WTC11 (cell line): ENCODE measurements at regions of chr7 and their contacts with region 1.

Region 1: DNA sequence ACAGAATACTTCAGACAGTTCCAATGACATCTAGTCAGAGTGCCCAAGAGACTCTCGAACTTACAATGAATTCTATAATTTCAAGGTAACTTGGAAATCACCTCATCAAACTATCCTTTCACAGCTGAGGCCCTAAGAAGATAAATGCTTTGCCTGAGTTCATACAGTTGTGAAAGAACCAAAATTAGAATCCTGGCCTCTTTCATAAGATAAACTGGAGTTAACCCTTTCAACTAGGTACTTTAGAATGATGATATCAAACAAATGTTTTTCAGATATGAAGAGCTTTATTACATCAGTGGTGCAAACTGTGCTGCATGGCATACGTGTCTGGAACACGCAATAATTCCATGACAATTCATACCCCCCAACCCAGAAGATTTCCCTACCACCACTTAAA is 17.9 kb downstream of the DOCK4 start:
- DNase-seq: no peak
- ATAC-seq: no peak
- H3K4me3 Mint-ChIP-seq: no peak overlapping the region
- H3K27ac Mint-ChIP-seq: no peak overlapping the region
- H3K4me1 Mint-ChIP-seq: peaks cover 15% of the 10 kb centered on the region
- H3K27me3 Mint-ChIP-seq: no peaks in the 10 kb centered on the region
- CTCF ChIP-seq: no peak

Region 2: GRCh38 chr7:111752022-111752582 is 436.2 kb before region 1 on chr7:
- CTCF ChIA-PET with region 1: interaction called, 10 read pairs
- POLR2A ChIA-PET with region 1: no interaction called
- DNase-seq: peak; percentile 80
- ATAC-seq: peak; percentile 81
- H3K4me3 Mint-ChIP-seq: no peak overlapping the region
- H3K27ac Mint-ChIP-seq: no peak overlapping the region
- H3K4me1 Mint-ChIP-seq: peaks cover 7% of the 10 kb centered on the region
- H3K27me3 Mint-ChIP-seq: no peaks in the 10 kb centered on the region
- CTCF ChIP-seq: peak; percentile 82

Region 3: GRCh38 chr7:112206238-112207044 is 18.2 kb after region 1 on chr7 and contains the starts of genes DOCK4 and ZNF277:
- CTCF ChIA-PET with region 1: no interaction called
- POLR2A ChIA-PET with region 1: no interaction called
- DNase-seq: peak; percentile 99
- ATAC-seq: peak; percentile 88
- H3K4me3 Mint-ChIP-seq: peak within 1 kb of the TSS; percentile 89
- H3K27ac Mint-ChIP-seq: peak within 1 kb of the TSS; percentile 63
- H3K4me1 Mint-ChIP-seq: peaks cover 42% of the 10 kb centered on the region
- H3K27me3 Mint-ChIP-seq: no peaks in the 10 kb centered on the region
- CTCF ChIP-seq: no peak
- total RNA-seq, gene DOCK4: 13.3 to 20.4 TPM (median 15.2 TPM) in 3 replicates
- total RNA-seq, gene ZNF277: 18.3 to 22.5 TPM (median 20.6 TPM) in 3 replicates